Activated CD8-positive, alpha-beta T cell treated with anti-CD3 and anti-CD28 coated beads, Interleukin-2, amount 10 ng/mL, durations not matched to agents 7 days and 5 days (primary cell): ENCODE measurements at regions of chr6 and their contacts with region 1.

Region 1: GRCh38 chr6:106997390-106998158 is 23.0 kb upstream of the CD24 start:
- DNase-seq: peak; percentile 67
- ATAC-seq: peak; percentile 61
- H3K4me3 Mint-ChIP-seq: no peak overlapping the region
- H3K27ac Mint-ChIP-seq: no peak overlapping the region
- H3K4me1 Mint-ChIP-seq: peaks cover 4% of the 10 kb centered on the region
- H3K27me3 Mint-ChIP-seq: no peaks in the 10 kb centered on the region

Region 2: GRCh38 chr6:106764353-106764980 is 233.1 kb before region 1 on chr6:
- CTCF ChIA-PET with region 1: no interaction called
- POLR2A ChIA-PET with region 1: no interaction called
- DNase-seq: no peak
- ATAC-seq: no peak
- H3K4me3 Mint-ChIP-seq: no peak overlapping the region
- H3K27ac Mint-ChIP-seq: no peak overlapping the region
- H3K4me1 Mint-ChIP-seq: no peaks in the 10 kb centered on the region
- H3K27me3 Mint-ChIP-seq: no peaks in the 10 kb centered on the region

Region 3: GRCh38 chr6:106979427-106979884 is 18.1 kb before region 1 on chr6:
- CTCF ChIA-PET with region 1: interaction called, 21 read pairs
- POLR2A ChIA-PET with region 1: no interaction called
- DNase-seq: peak; percentile 84
- ATAC-seq: peak; percentile 80
- H3K4me3 Mint-ChIP-seq: no peak overlapping the region
- H3K27ac Mint-ChIP-seq: no peak overlapping the region
- H3K4me1 Mint-ChIP-seq: peaks cover 7% of the 10 kb centered on the region
- H3K27me3 Mint-ChIP-seq: peaks cover 26% of the 10 kb centered on the region

Region 4: DNA sequence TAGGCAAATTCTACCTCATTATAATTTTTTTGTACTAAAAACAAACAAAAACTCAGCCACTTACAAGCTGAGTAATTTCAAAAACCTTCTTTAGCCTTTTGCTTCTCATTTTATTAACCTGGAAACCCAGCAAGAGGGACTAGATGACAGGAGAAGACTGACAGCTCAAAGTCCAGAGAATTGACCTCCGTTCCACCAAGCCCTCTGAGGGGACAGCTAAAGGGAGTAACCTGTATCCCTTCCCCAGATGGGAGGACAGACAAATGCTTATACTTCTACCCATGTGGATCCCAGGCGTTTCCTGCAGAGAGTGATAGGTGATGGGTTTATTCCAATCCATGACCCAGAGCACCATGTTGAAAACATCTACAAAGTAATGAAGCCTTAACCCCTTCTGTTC is 11.9 kb after region 1 on chr6:
- CTCF ChIA-PET with region 1: interaction called, 21 read pairs
- POLR2A ChIA-PET with region 1: no interaction called
- DNase-seq: no peak
- ATAC-seq: no peak
- H3K4me3 Mint-ChIP-seq: no peak overlapping the region
- H3K27ac Mint-ChIP-seq: no peak overlapping the region
- H3K4me1 Mint-ChIP-seq: no peaks in the 10 kb centered on the region
- H3K27me3 Mint-ChIP-seq: no peaks in the 10 kb centered on the region

Region 5: DNA sequence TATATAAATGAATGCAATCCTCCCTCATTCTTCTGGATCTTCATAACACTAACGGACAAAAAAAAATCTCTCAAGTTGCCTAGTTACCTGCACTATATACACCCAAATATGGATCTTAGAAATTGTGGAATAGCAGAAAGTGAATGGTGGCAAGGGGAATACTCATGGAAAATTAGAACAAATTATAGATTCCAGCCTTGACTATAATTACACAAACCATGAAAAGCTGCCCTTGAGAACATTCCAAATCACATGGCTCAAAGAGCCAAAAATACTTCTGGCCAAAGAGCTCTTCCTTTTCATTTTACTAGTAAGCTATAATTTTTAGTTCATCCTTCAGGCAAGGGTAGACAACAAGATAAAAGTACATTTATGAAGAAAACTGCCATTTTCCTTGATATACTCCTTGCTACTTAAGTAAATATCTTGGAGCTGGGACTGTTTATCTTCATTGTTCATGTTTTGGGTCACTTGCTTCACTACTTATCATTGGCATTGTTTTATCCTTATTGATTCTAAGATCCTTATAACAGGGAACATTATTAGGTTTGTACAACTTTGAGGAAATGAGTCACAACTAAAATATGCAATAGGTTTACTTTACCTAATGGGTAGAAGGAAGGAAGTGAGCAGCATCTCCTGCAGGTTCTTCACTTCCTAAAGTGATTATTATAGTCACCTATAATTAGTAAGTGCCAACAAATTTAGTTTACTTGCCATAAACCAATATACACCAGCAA is 24.0 kb after region 1 on chr6:
- CTCF ChIA-PET with region 1: interaction called, 10 read pairs
- POLR2A ChIA-PET with region 1: no interaction called
- DNase-seq: no peak
- ATAC-seq: no peak
- H3K4me3 Mint-ChIP-seq: no peak overlapping the region
- H3K27ac Mint-ChIP-seq: no peak overlapping the region
- H3K4me1 Mint-ChIP-seq: peaks cover 8% of the 10 kb centered on the region
- H3K27me3 Mint-ChIP-seq: peaks cover 4% of the 10 kb centered on the region